PC-9 (cell line): ENCODE measurements at regions of chr22 and their contacts with region 1.

Region 1: DNA sequence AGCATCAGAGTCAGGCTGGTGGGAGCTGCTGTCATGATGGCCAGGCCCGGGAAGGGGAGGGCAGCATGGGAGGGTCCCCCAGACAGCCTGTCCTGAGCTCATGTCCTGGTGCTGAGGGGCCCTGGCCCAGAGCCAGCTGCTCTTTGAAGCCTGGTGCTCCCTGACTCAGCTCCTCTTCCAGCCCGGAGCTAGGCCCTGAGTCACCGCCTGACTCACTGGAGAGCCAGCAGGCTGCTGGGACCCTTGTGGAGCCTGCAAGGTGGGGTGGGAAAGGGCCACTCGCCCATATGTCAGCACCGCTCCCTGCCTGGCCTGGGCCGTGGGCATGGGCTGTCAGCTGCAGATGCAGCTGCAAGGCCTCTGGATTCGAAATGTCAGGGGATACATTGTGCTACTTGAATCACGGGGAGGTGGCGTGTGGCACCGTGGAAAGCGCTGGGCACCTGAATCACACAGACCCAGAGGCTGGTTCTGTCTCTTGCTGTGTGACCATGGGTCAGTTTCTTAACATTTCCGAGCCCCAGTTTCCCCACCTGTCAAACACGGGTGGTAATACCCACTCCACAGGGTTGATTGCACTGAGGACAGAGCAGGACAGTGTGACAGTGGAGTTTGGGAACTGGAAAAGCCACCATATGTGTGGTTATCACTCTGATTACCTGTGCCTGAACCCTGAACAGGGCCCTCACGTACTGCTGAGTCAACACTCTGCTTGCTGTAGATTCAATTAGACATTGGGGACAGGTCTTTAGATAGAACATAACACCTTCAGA is 4.4 kb downstream of the CACNA1I start:
- DNase-seq: peak; percentile 69 to 84
- H3K4me3 ChIP-seq: no peak overlapping the region
- H3K27ac ChIP-seq: no peak overlapping the region
- H3K4me1 ChIP-seq: peaks cover 18% of the 10 kb centered on the region
- H3K27me3 ChIP-seq: peaks cover 4% of the 10 kb centered on the region; the same call in 1 of the 2 replicates
- CTCF ChIP-seq: no peak

Region 2: GRCh38 chr22:39592134-39593065 is 17.4 kb after region 1 on chr22:
- CTCF ChIA-PET with region 1: no interaction called
- POLR2A ChIA-PET with region 1: interaction called, 3 read pairs
- intact Hi-C with region 1: loop called (anchors 2 kb)
- DNase-seq: peak; percentile 89 to 94
- H3K4me3 ChIP-seq: peak overlapping the region; percentile 24; the same call in 1 of the 2 replicates
- H3K27ac ChIP-seq: peak overlapping the region; percentile 60
- H3K4me1 ChIP-seq: peaks cover 23% of the 10 kb centered on the region
- H3K27me3 ChIP-seq: no peaks in the 10 kb centered on the region
- CTCF ChIP-seq: no peak

Region 3: DNA sequence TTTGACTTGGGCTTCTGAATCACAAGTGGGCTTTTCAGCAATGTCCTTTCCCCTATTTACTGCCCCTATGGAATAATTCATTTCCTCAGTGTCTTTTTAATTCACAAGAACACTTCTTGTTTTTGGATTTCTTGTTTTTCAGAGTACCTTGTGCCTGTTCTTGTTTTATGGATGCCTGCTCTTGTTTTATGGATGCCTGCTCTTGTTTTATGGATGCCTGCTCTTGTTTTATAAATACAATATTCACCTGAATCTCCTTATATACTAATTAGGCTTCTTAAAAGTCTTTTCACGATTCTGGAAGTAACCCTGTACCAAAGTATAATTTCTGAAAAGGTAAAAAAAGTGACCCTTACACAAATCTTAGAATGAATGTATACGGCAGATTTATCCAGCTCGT is 28.4 kb after region 1 on chr22:
- CTCF ChIA-PET with region 1: no interaction called
- POLR2A ChIA-PET with region 1: no interaction called
- intact Hi-C with region 1: no loop called
- DNase-seq: no peak
- H3K4me3 ChIP-seq: no peak overlapping the region
- H3K27ac ChIP-seq: no peak overlapping the region
- H3K4me1 ChIP-seq: peaks cover 19% of the 10 kb centered on the region
- H3K27me3 ChIP-seq: 0 out of 2 replicates have a peak, but pooled peaks cover 10% of the 10 kb centered on the region
- CTCF ChIP-seq: no peak

Region 4: DNA sequence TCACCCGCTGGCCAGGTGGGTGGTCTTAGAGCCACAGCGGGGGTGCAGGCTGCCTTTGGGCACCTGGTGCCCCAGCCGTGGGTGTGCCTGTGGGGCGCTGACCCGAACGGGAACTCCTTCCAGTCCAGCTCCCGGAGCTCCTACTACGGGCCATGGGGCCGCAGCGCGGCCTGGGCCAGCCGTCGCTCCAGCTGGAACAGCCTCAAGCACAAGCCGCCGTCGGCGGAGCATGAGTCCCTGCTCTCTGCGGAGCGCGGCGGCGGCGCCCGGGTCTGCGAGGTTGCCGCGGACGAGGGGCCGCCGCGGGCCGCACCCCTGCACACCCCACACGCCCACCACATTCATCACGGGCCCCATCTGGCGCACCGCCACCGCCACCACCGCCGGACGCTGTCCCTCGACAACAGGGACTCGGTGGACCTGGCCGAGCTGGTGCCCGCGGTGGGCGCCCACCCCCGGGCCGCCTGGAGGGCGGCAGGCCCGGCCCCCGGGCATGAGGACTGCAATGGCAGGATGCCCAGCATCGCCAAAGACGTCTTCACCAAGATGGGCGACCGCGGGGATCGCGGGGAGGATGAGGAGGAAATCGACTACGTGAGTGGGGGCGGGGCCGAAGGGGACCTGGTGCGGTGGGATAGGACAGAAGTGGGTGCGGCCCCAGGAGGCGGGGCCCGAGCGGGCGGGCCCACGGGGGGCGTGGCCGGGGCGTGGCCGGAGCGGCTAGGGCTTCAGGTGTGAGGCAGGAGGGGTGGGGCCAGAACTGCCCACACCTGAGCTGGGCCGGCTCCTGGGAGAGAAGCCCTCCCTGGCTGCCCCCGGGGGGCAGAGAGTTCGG is 87.1 kb after region 1 on chr22:
- CTCF ChIA-PET with region 1: no interaction called
- POLR2A ChIA-PET with region 1: no interaction called
- intact Hi-C with region 1: no loop called
- DNase-seq: peak in 1 of 2 experiments; percentile 60
- H3K4me3 ChIP-seq: no peak overlapping the region
- H3K27ac ChIP-seq: no peak overlapping the region
- H3K4me1 ChIP-seq: peaks cover 35% of the 10 kb centered on the region
- H3K27me3 ChIP-seq: no peaks in the 10 kb centered on the region
- CTCF ChIP-seq: no peak

Region 5: DNA sequence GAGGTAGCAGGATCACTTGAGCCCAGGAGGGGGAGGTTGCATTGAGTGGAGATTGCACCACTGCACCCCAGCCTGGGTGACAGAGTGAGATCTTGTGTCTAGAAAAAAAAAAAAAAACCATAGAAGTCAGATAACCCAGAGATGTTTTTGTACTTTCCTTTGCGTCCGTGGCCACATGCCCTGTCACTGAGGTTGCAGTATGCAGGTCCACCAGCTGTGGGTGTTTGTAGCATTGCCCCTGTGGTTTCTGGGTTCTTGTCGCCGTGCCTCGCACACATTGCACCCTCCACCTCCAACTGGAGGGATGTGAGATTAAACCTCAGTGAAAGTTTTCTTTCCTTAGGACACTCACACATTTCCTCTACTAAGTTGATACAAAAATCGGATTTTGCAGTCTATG is 673.0 kb after region 1 on chr22:
- CTCF ChIA-PET with region 1: no interaction called
- POLR2A ChIA-PET with region 1: no interaction called
- intact Hi-C with region 1: no loop called
- DNase-seq: no peak
- H3K4me3 ChIP-seq: no peak overlapping the region
- H3K27ac ChIP-seq: no peak overlapping the region
- H3K4me1 ChIP-seq: no peaks in the 10 kb centered on the region
- H3K27me3 ChIP-seq: no peaks in the 10 kb centered on the region
- CTCF ChIP-seq: no peak